ENCODE measurements at regions of chr6 and their contacts with region 1.

Region 1: GRCh38 chr6:7615611-7616383 is 25.8 kb downstream of the SNRNP48 start:
- DNase-seq: peak; percentile 54
- ATAC-seq: peak; percentile 30
- H3K4me3 Mint-ChIP-seq: no peak overlapping the region
- H3K27ac Mint-ChIP-seq: no peak overlapping the region
- H3K4me1 Mint-ChIP-seq: peaks cover 18% of the 10 kb centered on the region
- H3K27me3 Mint-ChIP-seq: no peaks in the 10 kb centered on the region

Region 2: GRCh38 chr6:7604506-7604905 is 11.3 kb before region 1 on chr6:
- CTCF ChIA-PET with region 1: interaction called, 21 read pairs
- POLR2A ChIA-PET with region 1: interaction called, 3 read pairs
- DNase-seq: no peak
- ATAC-seq: no peak
- H3K4me3 Mint-ChIP-seq: no peak overlapping the region
- H3K27ac Mint-ChIP-seq: no peak overlapping the region
- H3K4me1 Mint-ChIP-seq: peaks cover 15% of the 10 kb centered on the region
- H3K27me3 Mint-ChIP-seq: no peaks in the 10 kb centered on the region

Region 3: GRCh38 chr6:7652957-7653356 is 37.2 kb after region 1 on chr6:
- CTCF ChIA-PET with region 1: no interaction called
- POLR2A ChIA-PET with region 1: no interaction called
- DNase-seq: no peak
- ATAC-seq: no peak
- H3K4me3 Mint-ChIP-seq: no peak overlapping the region
- H3K27ac Mint-ChIP-seq: no peak overlapping the region
- H3K4me1 Mint-ChIP-seq: peaks cover 3% of the 10 kb centered on the region
- H3K27me3 Mint-ChIP-seq: peaks cover 2% of the 10 kb centered on the region

Measured in activated CD8-positive, alpha-beta T cell treated with anti-CD3 and anti-CD28 coated beads, Interleukin-2, amount 10 ng/mL, durations not matched to agents 7 days and 5 days (primary cell).